T-cell (primary cell): ENCODE measurements at regions of chr7 and their contacts with region 1.

Region 1: GRCh38 chr7:6350433-6351058 is 78.1 kb upstream of the CYTH3 start:
- DNase-seq: no peak
- ATAC-seq: no peak
- H3K4me3 ChIP-seq: no peak overlapping the region
- H3K4me3 Mint-ChIP-seq: no peak overlapping the region
- H3K27ac ChIP-seq: no peak overlapping the region
- H3K27ac Mint-ChIP-seq: peak overlapping the region in 1 of 2 donors; percentile 28
- H3K4me1 ChIP-seq: peaks cover 2 to 15% of the 10 kb centered on the region in 2 experiments
- H3K4me1 Mint-ChIP-seq: peaks cover 6 to 13% (median 11%) of the 10 kb centered on the region in 3 donors
- H3K27me3 ChIP-seq: peaks cover 0 to 8% of the 10 kb centered on the region in 2 experiments
- H3K27me3 Mint-ChIP-seq: peaks cover 4 to 5% of the 10 kb centered on the region in 2 donors

Region 2: GRCh38 chr7:6367701-6368211 is 17.2 kb after region 1 on chr7:
- CTCF ChIA-PET with region 1: interaction called, 5 to 16 read pairs
- POLR2A ChIA-PET with region 1: interaction called in 1 of 2 experiments, 10 read pairs
- DNase-seq: no peak
- ATAC-seq: no peak
- H3K4me3 ChIP-seq: no peak overlapping the region
- H3K4me3 Mint-ChIP-seq: no peak overlapping the region
- H3K27ac ChIP-seq: no peak overlapping the region
- H3K27ac Mint-ChIP-seq: no peak overlapping the region
- H3K4me1 ChIP-seq: peaks cover 1 to 3% of the 10 kb centered on the region in 2 experiments
- H3K4me1 Mint-ChIP-seq: peaks cover 0 to 5% (median 2%) of the 10 kb centered on the region in 3 donors
- H3K27me3 ChIP-seq: peaks cover 0 to 2% of the 10 kb centered on the region in 2 experiments
- H3K27me3 Mint-ChIP-seq: no peaks in the 10 kb centered on the region

Region 3: DNA sequence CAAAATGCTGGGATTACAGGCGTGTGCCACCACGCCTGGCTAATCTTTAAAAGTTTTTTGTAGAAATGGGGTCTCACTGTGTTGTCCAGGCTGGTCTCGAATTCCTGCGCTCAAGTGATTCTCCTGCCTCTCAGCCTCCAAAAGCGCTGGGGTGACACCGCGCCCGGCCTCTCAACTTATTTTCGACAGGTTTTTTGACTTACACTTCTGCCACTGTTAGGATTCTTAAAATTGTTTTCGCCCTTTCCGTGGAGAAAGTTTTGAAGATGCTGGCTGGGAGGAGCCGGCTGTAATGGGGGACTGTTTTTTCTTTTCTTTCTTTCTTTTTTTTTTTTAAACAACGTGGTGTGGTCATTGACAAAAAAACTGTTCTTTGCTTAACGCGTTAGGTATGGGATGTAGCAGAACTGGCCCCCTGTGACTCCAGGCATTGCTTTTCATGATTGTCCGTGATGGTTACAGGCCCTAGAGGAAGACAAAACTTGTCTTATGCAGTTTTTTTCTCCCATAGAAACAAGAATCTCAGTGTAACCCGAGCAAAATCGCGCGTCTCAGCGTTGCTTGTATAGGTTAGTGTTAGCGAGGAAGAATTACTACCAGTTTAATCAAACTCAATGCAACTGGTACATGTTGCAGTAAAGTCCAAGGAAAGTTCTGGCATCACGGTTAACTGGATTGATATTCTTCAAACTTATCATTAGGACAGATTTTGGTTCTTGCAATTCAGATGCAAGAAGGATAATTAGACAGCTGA is 25.0 kb after region 1 on chr7:
- CTCF ChIA-PET with region 1: interaction called in 1 of 2 experiments, 16 read pairs
- POLR2A ChIA-PET with region 1: no interaction called
- DNase-seq: peak in 28 of 35 experiments; percentile 3 to 58 (median 22)
- ATAC-seq: peak in 1 of 4 experiments; percentile 32
- H3K4me3 ChIP-seq: peak overlapping the region; percentile 71 to 73
- H3K4me3 Mint-ChIP-seq: peak overlapping the region; percentile 87 to 93 (median 87)
- H3K27ac ChIP-seq: peak overlapping the region; percentile 68
- H3K27ac Mint-ChIP-seq: peak overlapping the region; percentile 89 to 94
- H3K4me1 ChIP-seq: peaks cover 10 to 50% of the 10 kb centered on the region in 2 experiments
- H3K4me1 Mint-ChIP-seq: peaks cover 34 to 46% (median 40%) of the 10 kb centered on the region in 3 donors
- H3K27me3 ChIP-seq: no peaks in the 10 kb centered on the region
- H3K27me3 Mint-ChIP-seq: no peaks in the 10 kb centered on the region

Region 4: DNA sequence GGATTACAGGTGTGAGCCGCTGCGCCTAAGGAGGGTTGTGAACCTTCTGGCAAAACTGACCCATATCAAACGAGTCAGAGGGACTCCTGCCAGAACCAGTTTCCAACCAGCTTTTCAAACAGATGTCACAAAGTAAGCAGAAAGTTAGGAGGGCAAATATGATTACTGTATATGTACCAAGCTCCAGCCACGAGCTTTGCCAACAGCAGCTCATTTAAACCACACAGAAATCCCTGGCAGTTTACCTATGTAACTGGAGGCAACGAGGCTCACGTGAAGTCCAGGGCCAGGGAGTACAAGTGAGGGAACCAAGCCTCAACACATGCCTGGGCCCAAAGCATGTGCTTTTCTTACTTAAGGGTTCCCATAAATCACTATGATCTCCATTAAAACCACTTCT is 109.8 kb after region 1 on chr7:
- CTCF ChIA-PET with region 1: no interaction called
- POLR2A ChIA-PET with region 1: no interaction called
- DNase-seq: no peak
- ATAC-seq: no peak
- H3K4me3 ChIP-seq: no peak overlapping the region
- H3K4me3 Mint-ChIP-seq: no peak overlapping the region
- H3K27ac ChIP-seq: no peak overlapping the region
- H3K27ac Mint-ChIP-seq: no peak overlapping the region
- H3K4me1 ChIP-seq: no peaks in the 10 kb centered on the region
- H3K4me1 Mint-ChIP-seq: peaks cover 0 to 2% (median 0%) of the 10 kb centered on the region in 3 donors
- H3K27me3 ChIP-seq: no peaks in the 10 kb centered on the region
- H3K27me3 Mint-ChIP-seq: no peaks in the 10 kb centered on the region

Region 5: DNA sequence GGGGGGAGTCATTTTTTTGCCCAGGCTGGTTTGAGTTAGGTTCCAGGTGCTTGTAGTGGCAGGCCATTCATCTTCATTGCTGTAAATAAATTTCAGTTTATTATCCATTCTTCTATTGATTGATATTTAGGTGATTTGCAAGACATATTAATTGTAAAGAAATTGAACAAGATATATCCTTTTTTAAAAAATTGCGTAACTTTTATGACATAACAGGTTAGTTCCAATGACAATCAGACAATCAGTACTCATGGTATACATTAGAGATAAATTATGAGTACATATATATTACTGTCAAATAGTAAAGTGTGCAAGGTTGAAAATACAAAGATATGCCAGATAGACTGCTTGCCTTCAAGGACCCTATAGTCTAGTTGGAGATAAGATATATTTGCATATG is 1525.9 kb after region 1 on chr7:
- CTCF ChIA-PET with region 1: no interaction called
- POLR2A ChIA-PET with region 1: no interaction called
- DNase-seq: no peak
- ATAC-seq: no peak
- H3K4me3 ChIP-seq: no peak overlapping the region
- H3K4me3 Mint-ChIP-seq: no peak overlapping the region
- H3K27ac ChIP-seq: no peak overlapping the region
- H3K27ac Mint-ChIP-seq: no peak overlapping the region
- H3K4me1 ChIP-seq: no peaks in the 10 kb centered on the region
- H3K4me1 Mint-ChIP-seq: no peaks in the 10 kb centered on the region
- H3K27me3 ChIP-seq: no peaks in the 10 kb centered on the region
- H3K27me3 Mint-ChIP-seq: no peaks in the 10 kb centered on the region